ENCODE measurements at regions of chr1 and their contacts with region 1.

Region 1: DNA sequence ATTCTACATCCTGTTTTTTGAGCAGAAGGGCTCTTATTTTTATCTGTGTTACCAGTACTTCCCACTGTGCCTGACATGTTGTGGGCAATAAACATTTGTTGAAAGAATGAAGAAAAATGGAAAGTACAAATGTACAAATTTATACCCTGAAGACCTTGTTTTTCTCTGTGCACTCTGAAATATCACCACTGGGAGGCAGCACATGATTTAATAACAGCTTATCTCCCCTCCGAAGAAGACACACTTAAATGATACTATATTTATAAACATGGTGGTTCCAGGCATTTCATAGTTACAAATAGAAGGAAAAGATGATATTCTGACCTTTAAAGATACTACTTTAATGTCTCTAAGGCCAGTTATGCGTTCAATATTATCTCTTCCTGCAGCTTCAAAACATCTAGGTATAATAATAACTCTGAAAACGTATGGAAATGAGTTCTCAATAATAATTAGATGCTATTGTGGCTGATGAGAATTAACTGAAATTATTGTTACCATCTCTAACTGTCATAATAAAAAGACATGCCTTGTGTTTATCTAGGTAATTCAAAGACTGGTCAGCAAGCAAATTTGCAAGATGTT is 12.8 kb downstream of the DYNLT5 start:
- DNase-seq: no peak
- H3K4me3 Mint-ChIP-seq: no peak overlapping the region
- H3K27ac Mint-ChIP-seq: no peak overlapping the region
- H3K4me1 Mint-ChIP-seq: peaks cover 18% of the 10 kb centered on the region
- H3K27me3 Mint-ChIP-seq: no peaks in the 10 kb centered on the region

Region 2: DNA sequence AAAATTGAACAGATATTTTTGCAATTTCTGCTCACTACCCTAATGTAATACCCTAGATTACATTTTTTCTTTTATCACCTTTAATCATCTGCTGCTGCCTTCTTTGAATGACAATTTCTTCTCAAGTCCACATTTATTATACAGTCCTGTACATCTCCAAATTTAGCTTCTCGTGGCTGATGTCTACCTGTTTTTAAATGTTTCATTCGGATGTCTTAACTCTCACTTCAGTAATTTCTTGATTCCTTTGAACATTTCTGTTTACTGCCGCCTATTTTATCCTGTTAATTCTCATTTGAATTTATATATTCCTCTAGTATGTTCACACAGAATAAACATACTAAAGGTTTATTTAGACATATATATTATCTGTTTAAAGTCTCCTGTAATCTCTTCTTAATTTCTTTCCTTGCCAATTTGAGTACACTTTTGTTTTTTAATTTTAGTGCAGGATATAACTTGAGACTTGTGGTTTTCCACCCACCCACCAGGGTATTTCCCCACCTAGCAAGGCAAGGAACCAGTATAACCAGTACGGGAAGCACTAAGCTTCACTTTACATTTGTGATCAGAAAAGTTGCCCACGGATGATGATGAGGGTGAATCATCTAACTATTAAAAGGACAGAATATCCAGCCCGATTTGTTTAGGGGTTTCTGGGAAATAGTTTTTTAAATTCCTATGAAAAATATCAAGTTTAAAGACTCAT is 23.3 kb after region 1 on chr1:
- intact Hi-C with region 1: loop called (anchors 2 kb)
- DNase-seq: peak; percentile 10
- H3K4me3 Mint-ChIP-seq: no peak overlapping the region
- H3K27ac Mint-ChIP-seq: peak overlapping the region; percentile 69
- H3K4me1 Mint-ChIP-seq: peaks cover 12% of the 10 kb centered on the region
- H3K27me3 Mint-ChIP-seq: peaks cover 2% of the 10 kb centered on the region

Region 3: DNA sequence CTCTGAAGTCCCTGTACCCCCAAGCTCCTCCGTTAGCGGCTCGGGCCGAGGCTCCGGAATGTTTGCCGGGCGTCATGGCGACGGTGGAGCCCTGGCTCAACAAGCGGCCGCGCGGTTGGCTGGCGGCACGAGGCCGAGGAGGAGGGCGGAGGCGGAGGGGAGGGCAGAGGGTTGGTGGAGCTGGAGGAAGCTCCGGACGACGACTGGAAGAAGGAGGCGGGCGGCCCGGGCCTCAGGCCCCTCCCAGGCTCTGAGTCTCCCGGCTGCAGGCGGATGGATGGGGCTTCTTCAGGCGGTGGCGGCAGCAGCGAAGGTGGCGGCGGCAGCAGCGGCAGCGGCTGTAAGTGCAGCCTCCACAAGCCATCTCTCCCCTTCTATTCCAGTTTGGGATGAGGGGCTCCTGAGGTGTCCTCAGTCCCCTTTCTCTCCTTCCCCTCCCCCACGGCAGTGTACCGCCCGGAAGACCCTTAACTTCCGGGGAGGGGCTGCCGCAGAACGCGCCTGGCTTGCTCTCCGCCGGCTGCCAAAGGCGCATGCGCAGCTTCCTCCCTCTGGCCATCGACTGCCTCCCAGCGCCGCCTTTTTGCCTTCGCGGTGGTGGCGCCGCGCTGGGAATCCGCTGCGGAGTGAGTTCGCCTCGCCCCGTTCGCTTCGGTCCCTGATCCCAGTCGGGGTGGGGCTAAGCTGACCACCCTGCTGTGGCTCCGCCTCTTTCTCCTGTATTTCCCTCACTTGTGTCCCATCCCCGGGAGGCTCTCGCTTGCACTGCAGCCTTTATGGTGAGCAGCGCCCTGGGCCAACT is 159.9 kb after region 1 on chr1 and contains the starts of genes DNAI4 and MIER1:
- intact Hi-C with region 1: loop called (anchors 2 kb)
- DNase-seq: peak; percentile 97
- H3K4me3 Mint-ChIP-seq: peak within 1 kb of the TSS; percentile 92
- H3K27ac Mint-ChIP-seq: peak within 1 kb of the TSS; percentile 94
- H3K4me1 Mint-ChIP-seq: peaks cover 44% of the 10 kb centered on the region
- H3K27me3 Mint-ChIP-seq: no peaks in the 10 kb centered on the region
- total RNA-seq, gene DNAI4: 0.90 and 1.7 TPM in 2 replicates
- total RNA-seq, gene MIER1: 44.5 and 45.1 TPM in 2 replicates

Region 4: GRCh38 chr1:66996018-66996682 is 231.1 kb after region 1 on chr1:
- intact Hi-C with region 1: loop called (anchors 1 kb)
- DNase-seq: peak; percentile 49
- H3K4me3 Mint-ChIP-seq: no peak overlapping the region
- H3K27ac Mint-ChIP-seq: no peak overlapping the region
- H3K4me1 Mint-ChIP-seq: peaks cover 15% of the 10 kb centered on the region
- H3K27me3 Mint-ChIP-seq: no peaks in the 10 kb centered on the region

Region 5: GRCh38 chr1:67214420-67215174 is 449.5 kb after region 1 on chr1:
- intact Hi-C with region 1: loop called (anchors 1 kb)
- DNase-seq: no peak
- H3K4me3 Mint-ChIP-seq: no peak overlapping the region
- H3K27ac Mint-ChIP-seq: no peak overlapping the region
- H3K4me1 Mint-ChIP-seq: peaks cover 32% of the 10 kb centered on the region
- H3K27me3 Mint-ChIP-seq: no peaks in the 10 kb centered on the region

Measured in activated T-helper 2 cell treated with anti-CD3 and anti-CD28 coated beads, Interferon-gamma antibody, Interleukin-2, Interleukin-4, amounts not matched to agents 10 μg/mL and 5 μg/mL and 100 μg/mL, durations not matched to agents 14 hours and 24 hours and 36 hours (primary cell).